Left ventricle myocardium superior (tissue), 1 donor: ENCODE measurements at regions of chr1 and their contacts with region 1.

Region 1: GRCh38 chr1:165592945-165593823 is 37.9 kb upstream of the MGST3 start:
- DNase-seq: no peak
- ATAC-seq: peak; percentile 64

Region 2: GRCh38 chr1:165403835-165404482 is 189.2 kb before region 1 on chr1:
- intact Hi-C with region 1: loop called (anchors 5 kb)
- DNase-seq: no peak
- ATAC-seq: peak; percentile 68

Region 3: DNA sequence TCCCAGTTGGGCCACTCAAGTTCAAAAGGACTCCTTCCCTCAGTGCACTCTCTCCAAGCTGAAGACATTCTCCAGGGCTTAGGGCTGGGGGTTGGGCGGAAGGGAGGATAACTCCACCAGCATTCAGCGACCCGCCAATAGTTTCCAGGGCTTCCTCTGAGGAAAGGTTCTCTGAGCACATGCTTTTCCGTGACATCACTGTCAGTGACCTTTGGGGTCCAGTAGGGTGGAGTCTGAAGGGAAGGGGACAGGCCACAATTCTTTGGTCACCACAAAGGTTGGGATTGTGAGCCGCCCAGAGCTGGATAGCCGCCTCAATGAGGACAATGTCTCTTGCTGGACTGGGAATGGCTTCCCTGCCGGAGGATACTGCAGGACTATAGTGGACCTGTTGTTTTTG is 125.5 kb before region 1 on chr1:
- intact Hi-C with region 1: no loop called
- DNase-seq: no peak
- ATAC-seq: peak; percentile 59